A549 (cell line): ENCODE measurements at regions of chr17 and their contacts with region 1.

Region 1: DNA sequence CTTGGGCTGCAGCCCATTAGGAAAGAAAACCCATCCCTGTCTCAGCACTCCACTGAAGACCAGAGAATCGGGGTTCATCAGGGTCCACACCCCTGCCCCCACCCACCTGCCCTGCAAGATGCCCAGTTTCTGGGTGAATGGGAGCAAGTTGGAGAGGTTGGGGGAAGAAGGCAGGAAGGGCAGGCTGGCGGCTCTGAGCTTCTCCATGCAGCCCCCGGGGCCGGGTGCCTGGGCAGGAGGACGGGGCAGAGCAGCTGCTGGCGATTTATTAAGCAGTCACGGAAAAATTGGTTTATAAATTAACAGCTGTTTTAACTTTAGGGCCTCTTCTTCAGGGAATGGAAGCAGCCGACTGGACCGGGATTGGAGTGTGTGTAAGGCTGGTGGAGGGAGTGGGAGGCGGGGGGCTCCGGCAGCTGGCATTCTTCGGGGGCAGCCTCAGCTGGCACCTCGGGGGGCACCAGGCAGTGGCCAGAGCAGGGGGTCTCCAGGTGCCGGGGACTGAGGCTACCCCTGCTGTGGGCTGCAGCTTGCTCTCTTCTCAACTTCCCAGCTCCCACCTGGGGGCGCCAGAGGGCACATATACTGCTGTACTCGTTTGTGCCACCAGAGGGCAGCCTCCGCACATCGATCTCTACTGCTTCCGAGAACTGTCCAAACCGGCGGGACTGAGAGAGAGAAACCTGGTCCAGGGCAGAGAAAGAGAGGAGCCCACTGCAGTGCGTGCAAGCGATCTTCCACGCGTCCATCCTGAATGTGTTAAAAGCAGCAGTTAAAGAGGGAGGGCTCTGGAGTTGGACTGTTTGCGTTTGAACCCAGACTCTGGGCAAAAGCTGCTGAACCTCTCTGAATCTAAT is 5.0 kb upstream of the PPP1R1B start:
- DNase-seq: peak; percentile 86 to 94
- ATAC-seq: peak; percentile 44 to 77
- H3K4me3 ChIP-seq: peak overlapping the region; percentile 12; the same call in 1 of the 3 replicates
- H3K27ac ChIP-seq: 0 out of 6 replicates have a peak overlapping the region, but pooled peaks of 1 of the 2 experiments have one; percentile 5
- H3K4me1 ChIP-seq: peaks cover 15% of the 10 kb centered on the region
- CTCF ChIP-seq: peak; percentile 100
- EP300 ChIP-seq: no peak
- POLR2A ChIP-seq: no peak
- RAD21 ChIP-seq: peak; percentile 96 to 97

Region 2: DNA sequence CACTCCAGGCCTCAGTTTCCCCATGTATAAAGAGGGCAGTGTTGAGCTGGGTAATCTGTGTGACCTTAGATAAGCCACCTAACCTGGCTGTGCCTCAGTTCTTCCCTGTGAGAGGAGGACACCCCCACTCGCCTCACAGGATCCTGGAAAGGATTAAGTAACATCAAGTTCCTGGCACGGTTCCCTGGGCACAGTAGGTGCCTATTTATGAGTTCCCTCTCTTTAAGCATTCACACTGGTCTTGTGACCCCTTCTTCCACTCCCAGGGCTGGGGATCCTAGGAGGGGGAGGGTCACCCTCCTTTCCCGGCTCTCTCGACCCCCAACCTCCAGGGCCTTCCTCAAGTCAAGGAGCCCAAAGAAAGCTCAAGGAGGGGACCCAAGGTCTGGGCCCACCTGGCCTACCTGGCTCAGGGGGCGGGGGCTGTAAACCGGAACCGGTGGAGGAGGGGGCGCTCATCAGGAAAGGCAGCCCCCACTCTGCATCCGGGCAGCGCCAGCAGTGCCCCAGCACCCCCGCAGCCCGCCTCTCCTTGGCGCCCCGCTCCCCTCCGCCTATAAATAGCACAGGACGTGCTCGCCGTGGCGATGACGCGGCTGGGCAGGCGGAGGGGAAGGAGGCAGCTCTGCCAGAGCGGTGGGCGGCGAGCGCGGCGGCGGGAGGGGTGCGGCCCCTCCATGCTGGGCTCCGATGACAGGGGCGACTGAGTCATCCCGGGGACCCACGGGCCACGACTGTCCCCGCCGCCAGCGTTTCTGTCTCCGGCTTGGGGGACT is 412.2 kb before region 1 on chr17:
- CTCF ChIA-PET with region 1: interaction called, 44 read pairs
- POLR2A ChIA-PET with region 1: no interaction called
- DNase-seq: no peak
- ATAC-seq: no peak
- H3K4me3 ChIP-seq: peak overlapping the region; percentile 25; the same call in 2 of the 3 replicates
- H3K27ac ChIP-seq: peak overlapping the region; percentile 64 to 73; a peak in 4 of 6 replicates
- H3K4me1 ChIP-seq: peaks cover 34% of the 10 kb centered on the region
- CTCF ChIP-seq: no peak
- EP300 ChIP-seq: no peak
- POLR2A ChIP-seq: no peak
- RAD21 ChIP-seq: no peak

Region 3: GRCh38 chr17:39408360-39408759 is 213.4 kb before region 1 on chr17:
- CTCF ChIA-PET with region 1: no interaction called
- POLR2A ChIA-PET with region 1: no interaction called
- DNase-seq: no peak
- ATAC-seq: no peak
- H3K4me3 ChIP-seq: no peak overlapping the region
- H3K27ac ChIP-seq: no peak overlapping the region
- H3K4me1 ChIP-seq: peaks cover 44% of the 10 kb centered on the region
- CTCF ChIP-seq: no peak
- EP300 ChIP-seq: no peak
- POLR2A ChIP-seq: no peak
- RAD21 ChIP-seq: no peak

Region 4: GRCh38 chr17:39547713-39548478 is 73.9 kb before region 1 on chr17:
- CTCF ChIA-PET with region 1: interaction called, 533 read pairs
- POLR2A ChIA-PET with region 1: interaction called, 3 read pairs
- DNase-seq: peak; percentile 69 to 75
- ATAC-seq: peak; percentile 91 to 92
- H3K4me3 ChIP-seq: no peak overlapping the region
- H3K27ac ChIP-seq: no peak overlapping the region
- H3K4me1 ChIP-seq: no peaks in the 10 kb centered on the region
- CTCF ChIP-seq: peak; percentile 99
- EP300 ChIP-seq: no peak
- POLR2A ChIP-seq: no peak
- RAD21 ChIP-seq: peak; percentile 87 to 88

Region 5: GRCh38 chr17:39716879-39717536 is 95.3 kb after region 1 on chr17:
- CTCF ChIA-PET with region 1: interaction called, 18 read pairs
- POLR2A ChIA-PET with region 1: no interaction called
- DNase-seq: no peak
- ATAC-seq: 0 out of 6 replicates have a peak, but pooled peaks of 1 of the 2 experiments have one; percentile 10
- H3K4me3 ChIP-seq: no peak overlapping the region
- H3K27ac ChIP-seq: no peak overlapping the region
- H3K4me1 ChIP-seq: no peaks in the 10 kb centered on the region
- CTCF ChIP-seq: no peak
- EP300 ChIP-seq: no peak
- POLR2A ChIP-seq: no peak
- RAD21 ChIP-seq: no peak

Region 6: GRCh38 chr17:39754161-39754951 is 132.6 kb after region 1 on chr17:
- CTCF ChIA-PET with region 1: interaction called, 217 read pairs
- POLR2A ChIA-PET with region 1: interaction called, 3 read pairs
- DNase-seq: peak; percentile 85 to 95
- ATAC-seq: peak; percentile 80 to 94
- H3K4me3 ChIP-seq: peak overlapping the region; percentile 69
- H3K27ac ChIP-seq: peak overlapping the region; percentile 83 to 96
- H3K4me1 ChIP-seq: peaks cover 21% of the 10 kb centered on the region
- CTCF ChIP-seq: peak; percentile 99
- EP300 ChIP-seq: no peak
- POLR2A ChIP-seq: peak; percentile 68
- RAD21 ChIP-seq: peak; percentile 92 to 100

Region 7: DNA sequence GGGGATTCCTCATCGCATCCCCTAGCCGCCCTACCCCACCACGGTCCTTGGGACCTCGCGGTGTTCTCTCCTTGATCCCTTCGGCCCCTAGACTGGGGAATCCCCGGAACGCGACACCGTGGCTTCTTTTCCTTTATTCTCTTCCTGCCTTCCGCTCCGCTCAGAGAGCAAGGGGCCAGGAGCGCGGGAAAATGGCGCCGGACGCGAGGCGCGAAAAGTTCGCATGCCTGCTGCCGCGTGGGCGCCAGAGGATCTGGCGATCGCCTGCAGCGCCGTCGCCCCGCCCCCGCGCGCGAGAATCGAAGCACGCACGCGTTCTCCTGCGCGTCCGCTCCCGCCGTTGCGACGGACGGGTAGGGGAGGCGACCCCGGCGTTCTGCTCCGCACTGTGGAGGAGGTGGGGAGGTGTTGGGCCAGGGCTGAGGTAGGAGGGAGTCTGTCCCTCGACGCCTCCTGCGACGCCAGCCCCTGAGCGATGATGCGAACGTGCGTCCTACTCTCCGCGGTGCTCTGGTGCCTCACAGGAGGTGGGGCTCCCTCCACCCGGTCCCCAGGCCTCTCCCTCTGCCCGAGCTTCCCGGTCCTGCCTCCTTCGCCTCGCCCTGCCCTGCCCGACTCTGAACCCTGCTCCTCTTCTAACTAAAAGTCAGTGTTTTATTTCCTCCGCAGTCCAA is 246.3 kb after region 1 on chr17 and contains the start of gene ZPBP2:
- CTCF ChIA-PET with region 1: no interaction called
- POLR2A ChIA-PET with region 1: no interaction called
- DNase-seq: no peak
- ATAC-seq: no peak
- H3K4me3 ChIP-seq: no peak within 1 kb of the TSS
- H3K27ac ChIP-seq: no peak within 1 kb of the TSS
- H3K4me1 ChIP-seq: peaks cover 9% of the 10 kb centered on the region; the same call in 2 of the 3 replicates
- CTCF ChIP-seq: no peak
- EP300 ChIP-seq: no peak
- POLR2A ChIP-seq: no peak
- RAD21 ChIP-seq: no peak
- polyA plus RNA-seq, gene ZPBP2: not detected in 2 replicates

Region 8: GRCh38 chr17:39980351-39981206 is 358.8 kb after region 1 on chr17 and contains the start of gene PSMD3:
- CTCF ChIA-PET with region 1: interaction called, 12 read pairs
- POLR2A ChIA-PET with region 1: interaction called, 6 read pairs
- DNase-seq: peak; percentile 97 to 100
- ATAC-seq: peak; percentile 91 to 94
- H3K4me3 ChIP-seq: peak within 1 kb of the TSS; percentile 89
- H3K27ac ChIP-seq: peak within 1 kb of the TSS; percentile 93 to 95
- H3K4me1 ChIP-seq: peaks cover 20% of the 10 kb centered on the region
- CTCF ChIP-seq: peak; percentile 79
- EP300 ChIP-seq: no peak
- POLR2A ChIP-seq: peak; percentile 87
- RAD21 ChIP-seq: peak; percentile 79 to 85
- polyA plus RNA-seq, gene PSMD3: 87.7 and 113 TPM in 2 replicates